Dendritic cell treated with granulocyte-macrophage colony-stimulating factor and Interleukin-4, amounts not matched to agents 40 ng/mL and 50 ng/mL, for 4 days (primary cell): ENCODE measurements at regions of chrX and their contacts with region 1.

Region 1: DNA sequence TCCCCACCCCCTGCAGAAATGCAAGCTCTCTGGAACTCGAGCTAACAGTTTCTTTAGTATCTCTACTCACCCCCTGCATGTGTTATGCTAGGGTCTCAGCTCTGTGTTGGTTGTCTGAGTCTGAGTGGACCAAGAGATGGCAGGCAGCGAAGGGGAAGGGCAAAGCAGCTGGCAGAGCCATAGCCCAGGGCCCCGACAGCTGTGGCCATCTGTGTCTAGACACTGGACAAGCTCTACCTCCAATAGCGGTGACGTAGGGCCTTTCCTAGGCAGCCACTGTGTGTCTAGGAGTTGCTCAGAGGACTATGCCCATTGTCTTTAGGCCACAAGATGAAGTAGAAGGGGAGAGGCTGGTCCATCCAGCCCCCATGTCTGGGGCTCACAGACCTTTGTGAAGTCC is 79.2 kb downstream of the EFNB1 start:
- H3K4me3 Mint-ChIP-seq: no peak overlapping the region
- H3K27ac Mint-ChIP-seq: no peak overlapping the region
- H3K4me1 Mint-ChIP-seq: peaks cover 6% of the 10 kb centered on the region
- H3K27me3 Mint-ChIP-seq: peaks cover 23% of the 10 kb centered on the region

Region 2: GRCh38 chrX:68599251-68600152 is 308.6 kb before region 1 on chrX:
- intact Hi-C with region 1: no loop called
- H3K4me3 Mint-ChIP-seq: no peak overlapping the region
- H3K27ac Mint-ChIP-seq: no peak overlapping the region
- H3K4me1 Mint-ChIP-seq: peaks cover 11% of the 10 kb centered on the region
- H3K27me3 Mint-ChIP-seq: peaks cover 2% of the 10 kb centered on the region

Region 3: GRCh38 chrX:68853665-68854251 is 54.3 kb before region 1 on chrX:
- intact Hi-C with region 1: no loop called
- H3K4me3 Mint-ChIP-seq: no peak overlapping the region
- H3K27ac Mint-ChIP-seq: no peak overlapping the region
- H3K4me1 Mint-ChIP-seq: no peaks in the 10 kb centered on the region
- H3K27me3 Mint-ChIP-seq: peaks cover 6% of the 10 kb centered on the region

Region 4: DNA sequence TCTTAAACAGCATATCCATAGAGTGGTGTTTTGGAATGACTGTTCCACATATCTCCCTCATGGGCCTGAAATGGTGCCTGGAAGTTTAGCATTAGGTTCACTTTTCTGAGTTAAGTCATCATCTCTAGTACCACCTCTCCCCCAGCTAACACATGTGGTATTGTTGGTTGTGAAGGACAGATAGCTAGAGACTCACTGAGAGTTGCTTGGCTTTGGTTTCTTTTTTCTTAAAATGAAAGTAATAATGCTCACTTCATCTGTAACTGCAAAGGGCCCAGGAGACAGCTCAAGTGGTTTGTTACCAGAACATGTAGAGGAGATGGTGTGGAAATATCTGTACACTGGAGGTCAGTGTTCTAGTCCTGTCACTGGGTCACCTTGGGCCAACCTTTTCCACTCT is 11.6 kb after region 1 on chrX:
- intact Hi-C with region 1: loop called (anchors 1 kb)
- H3K4me3 Mint-ChIP-seq: no peak overlapping the region
- H3K27ac Mint-ChIP-seq: no peak overlapping the region
- H3K4me1 Mint-ChIP-seq: no peaks in the 10 kb centered on the region
- H3K27me3 Mint-ChIP-seq: peaks cover 3% of the 10 kb centered on the region